ENCODE measurements at regions of chr1 and their contacts with region 1.

Region 1: GRCh38 chr1:114282751-114283403 is 129.2 kb upstream of the SYT6 start:
- DNase-seq: peak; percentile 91

Region 2: GRCh38 chr1:113835642-113836307 is 447.1 kb before region 1 on chr1:
- intact Hi-C with region 1: loop called (anchors 10 kb)
- DNase-seq: no peak

Measured in cardiac septum (tissue), 1 donor.